CD8-positive, alpha-beta T cell (primary cell): ENCODE measurements at regions of chr7 and their contacts with region 1.

Region 1: DNA sequence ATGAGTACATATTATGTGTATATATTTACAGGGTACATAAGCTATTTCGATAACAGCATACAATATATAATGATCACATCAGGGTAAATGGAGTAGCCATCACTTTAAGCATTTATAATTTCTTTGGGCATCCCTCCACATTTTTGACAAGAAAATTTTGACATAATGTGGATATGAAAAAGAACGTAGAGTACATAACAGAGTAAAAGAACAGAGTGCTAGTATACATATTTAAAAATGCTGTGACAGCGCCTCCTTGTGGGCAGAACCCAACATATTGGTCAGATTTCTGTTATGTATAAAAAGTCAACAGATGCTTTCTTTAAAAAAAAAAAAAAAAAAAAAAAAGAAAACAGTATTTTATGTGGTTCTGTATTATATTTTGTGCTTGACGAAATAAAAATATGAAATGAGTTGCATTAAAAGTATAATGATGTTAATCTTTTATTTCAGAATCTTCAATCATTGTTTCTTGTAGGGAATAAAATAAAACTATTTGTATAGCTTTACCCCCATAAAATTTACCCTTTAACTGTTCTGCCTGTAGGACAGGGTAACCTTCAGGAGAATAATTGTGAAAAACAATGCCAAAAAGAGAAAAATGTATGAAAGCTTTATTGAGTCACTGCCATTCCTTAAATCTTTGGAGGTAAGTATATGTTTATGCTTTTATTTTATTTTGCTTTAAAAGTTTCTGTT is 18.3 kb upstream of the HBP1 start:
- DNase-seq: peak; percentile 64 to 86 (median 81)
- ATAC-seq: peak; percentile 88
- H3K4me3 ChIP-seq: no peak overlapping the region
- H3K4me3 Mint-ChIP-seq: no peak overlapping the region
- H3K27ac ChIP-seq: no peak overlapping the region
- H3K27ac Mint-ChIP-seq: no peak overlapping the region
- H3K4me1 ChIP-seq: no peaks in the 10 kb centered on the region
- H3K4me1 Mint-ChIP-seq: peaks cover 6% of the 10 kb centered on the region
- H3K27me3 ChIP-seq: no peaks in the 10 kb centered on the region
- H3K27me3 Mint-ChIP-seq: no peaks in the 10 kb centered on the region
- CTCF ChIP-seq: peak; percentile 95

Region 2: GRCh38 chr7:106793015-106793975 is 357.2 kb before region 1 on chr7:
- CTCF ChIA-PET with region 1: interaction called, 133 read pairs
- POLR2A ChIA-PET with region 1: no interaction called
- intact Hi-C with region 1: loop called (anchors 1 kb)
- DNase-seq: peak in 6 of 9 experiments; percentile 16 to 75 (median 42)
- ATAC-seq: peak; percentile 82
- H3K4me3 ChIP-seq: no peak overlapping the region
- H3K4me3 Mint-ChIP-seq: no peak overlapping the region
- H3K27ac ChIP-seq: no peak overlapping the region
- H3K27ac Mint-ChIP-seq: no peak overlapping the region
- H3K4me1 ChIP-seq: no peaks in the 10 kb centered on the region
- H3K4me1 Mint-ChIP-seq: peaks cover 3% of the 10 kb centered on the region
- H3K27me3 ChIP-seq: no peaks in the 10 kb centered on the region
- H3K27me3 Mint-ChIP-seq: no peaks in the 10 kb centered on the region
- CTCF ChIP-seq: peak; percentile 88

Region 3: DNA sequence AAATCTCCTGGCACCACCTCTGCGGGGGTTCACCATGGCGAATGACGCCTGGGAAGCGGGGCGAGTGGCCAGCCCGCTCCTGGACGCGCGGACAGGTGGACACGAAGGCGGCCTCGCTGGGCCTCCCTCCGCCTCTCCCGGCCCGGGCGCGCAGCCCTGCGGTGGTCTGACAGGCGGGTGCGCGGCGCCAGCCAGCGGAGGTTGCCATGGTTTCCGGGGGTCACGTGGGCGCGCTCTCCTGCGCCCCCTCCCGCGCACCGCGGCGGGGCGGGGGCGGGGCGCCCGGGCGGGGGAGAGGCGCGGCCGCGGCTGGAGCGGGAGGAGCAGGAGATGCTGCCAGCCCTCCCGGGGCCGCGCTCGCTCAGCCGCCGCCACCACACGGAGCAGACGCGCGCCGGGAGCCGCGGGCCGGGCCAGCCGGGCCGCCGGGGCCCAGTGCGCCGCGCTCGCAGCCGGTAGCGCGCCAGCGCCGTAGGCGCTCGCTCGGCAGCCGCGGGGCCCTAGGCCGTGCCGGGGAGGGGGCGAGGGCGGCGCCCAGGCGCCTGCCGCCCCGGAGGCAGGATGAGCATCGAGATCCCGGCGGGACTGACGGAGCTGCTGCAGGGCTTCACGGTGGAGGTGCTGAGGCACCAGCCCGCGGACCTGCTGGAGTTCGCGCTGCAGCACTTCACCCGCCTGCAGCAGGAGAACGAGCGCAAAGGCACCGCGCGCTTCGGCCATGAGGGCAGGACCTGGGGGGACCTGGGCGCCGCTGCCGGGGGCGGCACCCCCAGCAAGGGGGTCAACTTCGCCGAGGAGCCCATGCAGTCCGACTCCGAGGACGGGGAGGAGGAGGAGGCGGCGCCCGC is 106.0 kb before region 1 on chr7 and contains the start of gene PRKAR2B:
- CTCF ChIA-PET with region 1: no interaction called
- POLR2A ChIA-PET with region 1: no interaction called
- intact Hi-C with region 1: loop called in 1 of 2 experiments (anchors 5 kb)
- DNase-seq: peak; percentile 55 to 91 (median 80)
- ATAC-seq: peak; percentile 93
- H3K4me3 ChIP-seq: peak within 1 kb of the TSS; percentile 50 to 58
- H3K4me3 Mint-ChIP-seq: peak within 1 kb of the TSS; percentile 86
- H3K27ac ChIP-seq: no peak within 1 kb of the TSS
- H3K27ac Mint-ChIP-seq: no peak within 1 kb of the TSS
- H3K4me1 ChIP-seq: peaks cover 13% of the 10 kb centered on the region
- H3K4me1 Mint-ChIP-seq: peaks cover 10% of the 10 kb centered on the region
- H3K27me3 ChIP-seq: peaks cover 7% of the 10 kb centered on the region in 2 experiments
- H3K27me3 Mint-ChIP-seq: peaks cover 7% of the 10 kb centered on the region
- CTCF ChIP-seq: no peak
- total RNA-seq, gene PRKAR2B: 0.33 to 0.60 TPM

Region 4: GRCh38 chr7:107138696-107139420 is 11.7 kb before region 1 on chr7:
- CTCF ChIA-PET with region 1: interaction called, 22 read pairs
- POLR2A ChIA-PET with region 1: no interaction called
- intact Hi-C with region 1: no loop called
- DNase-seq: no peak
- ATAC-seq: no peak
- H3K4me3 ChIP-seq: no peak overlapping the region
- H3K4me3 Mint-ChIP-seq: no peak overlapping the region
- H3K27ac ChIP-seq: no peak overlapping the region
- H3K27ac Mint-ChIP-seq: no peak overlapping the region
- H3K4me1 ChIP-seq: no peaks in the 10 kb centered on the region
- H3K4me1 Mint-ChIP-seq: no peaks in the 10 kb centered on the region
- H3K27me3 ChIP-seq: no peaks in the 10 kb centered on the region
- H3K27me3 Mint-ChIP-seq: no peaks in the 10 kb centered on the region
- CTCF ChIP-seq: no peak

Region 5: DNA sequence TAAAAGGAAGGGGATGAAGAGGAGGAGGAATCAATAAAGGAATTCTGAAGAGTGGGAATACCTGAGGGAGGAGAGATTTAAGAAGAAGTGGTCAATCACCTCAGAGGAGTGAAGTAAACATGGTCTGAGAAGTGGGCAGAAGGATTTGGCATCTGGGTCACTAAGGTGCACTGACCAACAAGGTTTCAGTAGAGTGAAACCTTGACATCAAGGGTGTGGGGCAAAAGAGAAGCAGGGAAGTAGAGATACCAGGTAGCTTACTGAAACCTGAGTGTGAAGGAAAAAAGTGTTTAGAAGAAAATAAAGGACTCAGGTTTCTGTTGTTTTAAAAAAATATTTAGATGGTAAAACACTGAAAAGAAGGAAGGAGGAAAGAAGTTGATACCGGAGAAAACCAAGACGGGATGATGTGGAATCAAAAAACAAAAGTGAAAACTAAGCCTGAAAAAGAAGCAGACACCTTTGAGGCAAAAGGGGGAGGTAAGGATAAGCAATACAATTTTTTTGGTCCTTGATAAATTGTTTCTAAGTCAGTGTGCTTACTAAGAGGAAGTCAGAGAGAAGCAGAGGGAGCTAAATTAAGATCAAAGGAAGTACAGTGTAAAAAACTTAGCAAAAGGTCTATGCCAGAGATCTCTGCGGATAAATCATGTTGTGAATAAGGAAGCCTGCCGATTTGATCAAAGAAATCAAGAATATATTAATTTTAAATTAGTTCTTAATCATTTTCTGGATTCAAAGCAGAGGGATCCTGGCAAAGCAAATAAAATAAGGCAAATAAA is 182.2 kb after region 1 on chr7:
- CTCF ChIA-PET with region 1: no interaction called
- POLR2A ChIA-PET with region 1: no interaction called
- intact Hi-C with region 1: no loop called
- DNase-seq: peak in 1 of 9 experiments; percentile 3
- ATAC-seq: no peak
- H3K4me3 ChIP-seq: no peak overlapping the region
- H3K4me3 Mint-ChIP-seq: peak overlapping the region; percentile 13
- H3K27ac ChIP-seq: no peak overlapping the region
- H3K27ac Mint-ChIP-seq: no peak overlapping the region
- H3K4me1 ChIP-seq: peaks cover 10% of the 10 kb centered on the region
- H3K4me1 Mint-ChIP-seq: peaks cover 15% of the 10 kb centered on the region
- H3K27me3 ChIP-seq: no peaks in the 10 kb centered on the region
- H3K27me3 Mint-ChIP-seq: no peaks in the 10 kb centered on the region
- CTCF ChIP-seq: no peak

Region 6: DNA sequence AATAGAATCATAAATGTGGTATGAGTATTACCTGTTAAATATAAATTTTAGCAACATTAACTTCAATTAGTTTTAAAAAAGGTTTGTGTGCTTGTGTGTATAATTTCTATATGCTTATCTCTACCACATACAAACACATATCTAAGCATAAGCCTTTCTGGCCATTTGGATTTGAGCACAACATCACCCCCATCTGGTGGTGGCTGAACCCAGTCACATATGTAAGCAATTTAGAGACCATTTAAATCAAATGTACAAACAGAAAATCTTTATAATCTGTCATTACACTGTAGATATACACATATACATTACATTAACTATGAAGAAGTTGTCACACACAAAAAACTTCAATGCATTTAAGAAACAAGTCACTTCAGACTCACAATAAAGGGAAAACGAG is 351.1 kb after region 1 on chr7:
- CTCF ChIA-PET with region 1: interaction called, 3 read pairs
- POLR2A ChIA-PET with region 1: no interaction called
- intact Hi-C with region 1: loop called in 1 of 2 experiments (anchors 5 kb)
- DNase-seq: peak in 4 of 9 experiments; percentile 16 to 47 (median 30)
- ATAC-seq: no peak
- H3K4me3 ChIP-seq: no peak overlapping the region
- H3K4me3 Mint-ChIP-seq: no peak overlapping the region
- H3K27ac ChIP-seq: no peak overlapping the region
- H3K27ac Mint-ChIP-seq: no peak overlapping the region
- H3K4me1 ChIP-seq: no peaks in the 10 kb centered on the region
- H3K4me1 Mint-ChIP-seq: peaks cover 19% of the 10 kb centered on the region
- H3K27me3 ChIP-seq: no peaks in the 10 kb centered on the region
- H3K27me3 Mint-ChIP-seq: no peaks in the 10 kb centered on the region
- CTCF ChIP-seq: no peak